ENCODE measurements at regions of chr17 and their contacts with region 1.

Region 1: DNA sequence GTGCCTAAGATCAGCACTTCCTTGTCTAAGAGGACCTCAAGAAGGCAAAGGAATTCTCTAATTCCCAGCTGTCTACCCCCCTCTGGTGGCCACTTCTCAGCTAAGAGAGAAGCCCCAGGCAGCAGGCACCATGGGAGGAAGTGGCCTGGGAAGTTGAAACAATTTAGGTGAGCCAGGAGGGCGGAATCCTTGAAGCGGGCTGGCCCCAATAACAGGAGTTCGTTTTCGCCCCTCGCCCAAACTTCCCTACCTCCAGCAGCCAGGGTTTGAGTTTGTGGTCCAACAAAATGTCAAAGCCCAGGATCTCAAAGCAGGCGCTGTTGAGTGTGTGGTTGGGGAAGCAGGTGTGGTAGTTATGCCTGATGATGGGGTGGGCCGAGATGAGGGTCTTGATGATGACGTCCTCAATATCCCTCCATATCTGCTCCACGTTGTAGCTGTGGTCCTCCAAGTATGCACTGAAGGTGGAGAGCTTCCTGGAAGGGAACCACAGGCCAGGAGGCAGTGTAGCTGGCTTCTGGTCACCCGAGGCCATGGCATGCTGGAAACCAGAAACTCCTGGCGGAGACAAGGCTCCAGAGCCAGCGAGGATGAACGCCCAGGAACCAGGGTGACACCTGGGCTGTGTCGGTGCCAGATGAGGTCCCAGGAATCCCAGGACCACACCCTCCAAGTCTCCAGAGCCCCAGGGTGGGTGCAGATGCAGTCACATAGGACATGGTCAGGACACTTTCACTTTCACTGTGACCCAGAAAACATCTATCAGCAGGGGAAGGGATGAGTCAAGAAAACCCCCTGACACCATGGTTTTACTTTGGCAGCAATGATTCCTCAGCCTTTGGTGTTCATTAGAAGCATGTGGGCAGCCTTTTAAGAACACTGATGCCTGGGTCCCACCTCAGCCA is 25.6 kb downstream of the TTLL6 start:
- DNase-seq: peak; percentile 79
- ATAC-seq: peak; percentile 92
- H3K4me3 ChIP-seq: no peak overlapping the region
- H3K27ac ChIP-seq: no peak overlapping the region
- H3K4me1 ChIP-seq: peaks cover 14% of the 10 kb centered on the region
- H3K27me3 ChIP-seq: peaks cover 33% of the 10 kb centered on the region
- CTCF ChIP-seq: peak; percentile 91
- POLR2A ChIP-seq: no peak
- RAD21 ChIP-seq: peak; percentile 80

Region 2: DNA sequence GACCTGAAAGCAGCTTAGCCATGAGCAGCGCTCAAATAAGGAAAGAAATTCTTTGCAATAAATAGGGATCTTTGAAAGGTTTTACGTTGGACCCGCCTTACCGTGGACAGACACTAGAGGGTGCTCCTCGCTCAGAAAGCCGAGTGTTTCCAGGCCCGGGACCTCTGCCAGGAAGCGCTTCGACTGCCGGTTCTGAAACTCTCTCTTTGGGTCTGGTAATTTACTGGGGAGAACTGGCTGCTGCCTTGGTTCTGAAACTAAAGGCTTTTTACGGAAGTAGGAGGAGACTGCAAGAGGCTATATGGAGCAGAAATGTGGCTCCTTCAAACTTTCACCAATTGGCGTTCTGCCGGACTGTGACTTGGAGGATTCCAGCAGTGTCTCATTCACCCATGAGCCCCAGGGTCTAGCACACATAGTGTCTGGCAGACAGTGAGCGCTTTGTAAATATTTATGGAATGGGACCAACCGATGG is 119.6 kb before region 1 on chr17:
- CTCF ChIA-PET with region 1: interaction called, 7 read pairs
- POLR2A ChIA-PET with region 1: no interaction called
- dilution Hi-C with region 1: no loop called
- in situ Hi-C with region 1: loop called (anchors 5 kb)
- intact Hi-C with region 1: no loop called
- DNase-seq: peak; percentile 67
- ATAC-seq: peak; percentile 93
- H3K4me3 ChIP-seq: peak overlapping the region; percentile 35
- H3K27ac ChIP-seq: no peak overlapping the region
- H3K4me1 ChIP-seq: no peaks in the 10 kb centered on the region
- H3K27me3 ChIP-seq: peaks cover 26% of the 10 kb centered on the region
- CTCF ChIP-seq: peak; percentile 91
- POLR2A ChIP-seq: no peak
- RAD21 ChIP-seq: peak; percentile 83

Region 3: GRCh38 chr17:48678141-48678971 is 113.0 kb before region 1 on chr17:
- CTCF ChIA-PET with region 1: interaction called, 14 read pairs
- POLR2A ChIA-PET with region 1: no interaction called
- dilution Hi-C with region 1: no loop called
- in situ Hi-C with region 1: no loop called
- intact Hi-C with region 1: loop called (anchors 1 kb)
- DNase-seq: peak; percentile 19
- ATAC-seq: peak; percentile 98
- H3K4me3 ChIP-seq: no peak overlapping the region
- H3K27ac ChIP-seq: no peak overlapping the region
- H3K4me1 ChIP-seq: no peaks in the 10 kb centered on the region
- H3K27me3 ChIP-seq: peaks cover 49% of the 10 kb centered on the region
- CTCF ChIP-seq: peak; percentile 89
- POLR2A ChIP-seq: no peak
- RAD21 ChIP-seq: peak; percentile 76

Region 4: DNA sequence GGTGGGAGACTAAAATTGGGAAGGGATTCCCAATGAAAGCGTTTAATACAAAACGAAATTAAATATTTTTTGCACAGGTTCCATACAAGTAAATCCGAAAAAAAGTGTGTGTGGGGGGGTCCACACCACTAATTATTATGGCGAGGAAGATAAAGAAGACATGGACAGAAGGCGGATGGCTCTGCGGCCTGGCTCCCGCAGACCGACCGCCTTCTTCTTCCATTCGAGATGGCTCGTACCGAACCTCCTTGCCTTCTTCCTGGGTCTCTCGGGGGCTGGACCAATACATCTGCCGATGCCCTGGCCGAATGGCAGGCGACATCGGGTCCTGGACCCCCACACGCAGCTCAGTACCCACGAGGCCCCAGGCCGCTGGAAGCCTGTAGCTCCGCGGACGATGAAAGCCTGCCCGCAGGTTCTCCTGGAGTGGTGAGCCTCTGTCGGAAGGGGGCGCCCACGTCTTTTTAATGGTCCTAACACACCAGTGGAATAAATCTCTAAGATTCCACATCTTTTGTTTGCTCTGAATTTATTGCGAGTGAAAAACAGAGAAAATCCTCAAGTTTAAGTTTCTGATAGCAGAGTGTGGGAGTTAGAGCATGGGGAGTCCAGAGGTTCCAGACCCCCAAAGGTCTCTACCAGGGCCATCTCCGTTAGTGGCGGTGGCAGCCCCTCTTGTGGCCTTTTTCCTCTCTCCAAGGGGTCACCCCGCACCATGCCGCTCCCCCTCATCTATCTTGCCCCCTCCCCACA is 67.0 kb before region 1 on chr17:
- CTCF ChIA-PET with region 1: interaction called, 8 read pairs
- POLR2A ChIA-PET with region 1: no interaction called
- dilution Hi-C with region 1: no loop called
- in situ Hi-C with region 1: no loop called
- intact Hi-C with region 1: loop called (anchors 1 kb)
- DNase-seq: peak; percentile 67
- ATAC-seq: peak; percentile 94
- H3K4me3 ChIP-seq: no peak overlapping the region
- H3K27ac ChIP-seq: no peak overlapping the region
- H3K4me1 ChIP-seq: no peaks in the 10 kb centered on the region
- H3K27me3 ChIP-seq: peaks cover 95% of the 10 kb centered on the region
- CTCF ChIP-seq: peak; percentile 84
- POLR2A ChIP-seq: no peak
- RAD21 ChIP-seq: peak; percentile 80

Region 5: DNA sequence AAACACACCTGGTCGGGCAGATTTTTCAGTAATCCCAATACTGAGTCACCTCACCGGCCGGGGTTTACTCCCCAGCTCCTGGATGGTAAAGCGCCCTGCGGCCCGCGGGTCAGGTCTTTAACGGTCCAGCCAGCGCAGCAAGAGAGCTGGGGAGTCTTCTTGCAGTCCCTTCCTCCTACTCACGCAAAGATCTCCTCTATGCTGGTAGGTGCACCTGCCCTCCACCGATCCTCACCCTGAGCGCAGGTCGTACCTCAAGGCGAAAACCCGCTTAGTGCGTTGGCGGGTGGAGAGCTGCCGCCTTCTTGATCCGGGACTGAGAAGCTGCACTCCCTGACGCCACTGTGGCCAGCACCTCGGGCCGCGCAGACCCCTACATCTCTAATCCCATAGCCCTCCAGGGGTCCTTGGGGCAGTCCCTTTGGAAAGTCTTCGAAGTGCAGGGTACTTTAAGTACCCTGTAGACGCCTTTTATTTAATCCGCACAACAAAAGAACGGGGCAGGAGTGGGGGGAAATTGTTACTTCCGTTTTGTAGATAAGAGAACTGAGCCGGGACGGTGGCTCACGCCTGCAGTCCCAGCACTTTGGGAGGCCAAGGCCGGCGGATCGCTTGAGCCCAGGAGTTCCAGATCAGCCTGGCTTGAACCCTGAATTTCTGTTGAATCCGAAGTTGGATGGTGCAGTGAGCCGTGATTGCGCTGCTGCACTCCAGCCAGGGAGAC is 52.4 kb before region 1 on chr17:
- CTCF ChIA-PET with region 1: no interaction called
- POLR2A ChIA-PET with region 1: no interaction called
- dilution Hi-C with region 1: no loop called
- in situ Hi-C with region 1: loop called (anchors 10 kb)
- intact Hi-C with region 1: no loop called
- DNase-seq: no peak
- ATAC-seq: no peak
- H3K4me3 ChIP-seq: no peak overlapping the region
- H3K27ac ChIP-seq: no peak overlapping the region
- H3K4me1 ChIP-seq: no peaks in the 10 kb centered on the region
- H3K27me3 ChIP-seq: peaks cover 92% of the 10 kb centered on the region
- CTCF ChIP-seq: no peak
- POLR2A ChIP-seq: no peak
- RAD21 ChIP-seq: no peak

Region 6: DNA sequence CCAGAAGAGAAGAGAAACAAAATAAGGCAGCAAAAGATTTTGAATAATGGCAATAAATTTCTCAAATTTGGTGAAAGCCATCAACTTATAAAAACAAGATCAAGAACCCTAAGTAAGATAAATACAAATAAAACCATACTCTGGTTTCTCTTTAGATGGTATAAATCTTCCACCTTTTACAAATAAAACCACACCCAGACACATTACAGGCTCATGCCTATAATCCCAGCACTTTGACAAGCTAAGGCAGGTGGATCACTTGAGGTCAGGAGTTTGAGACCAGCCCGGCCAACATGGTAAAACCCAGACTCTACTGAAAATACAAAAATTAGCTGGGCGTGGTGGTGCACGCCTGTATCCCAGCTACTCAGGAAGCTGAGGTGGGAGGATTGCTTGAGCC is 18.1 kb before region 1 on chr17:
- CTCF ChIA-PET with region 1: no interaction called
- POLR2A ChIA-PET with region 1: no interaction called
- dilution Hi-C with region 1: no loop called
- in situ Hi-C with region 1: no loop called
- intact Hi-C with region 1: no loop called
- DNase-seq: no peak
- ATAC-seq: no peak
- H3K4me3 ChIP-seq: no peak overlapping the region
- H3K27ac ChIP-seq: no peak overlapping the region
- H3K4me1 ChIP-seq: no peaks in the 10 kb centered on the region
- H3K27me3 ChIP-seq: peaks cover 33% of the 10 kb centered on the region
- CTCF ChIP-seq: no peak
- POLR2A ChIP-seq: no peak
- RAD21 ChIP-seq: no peak

Region 7: DNA sequence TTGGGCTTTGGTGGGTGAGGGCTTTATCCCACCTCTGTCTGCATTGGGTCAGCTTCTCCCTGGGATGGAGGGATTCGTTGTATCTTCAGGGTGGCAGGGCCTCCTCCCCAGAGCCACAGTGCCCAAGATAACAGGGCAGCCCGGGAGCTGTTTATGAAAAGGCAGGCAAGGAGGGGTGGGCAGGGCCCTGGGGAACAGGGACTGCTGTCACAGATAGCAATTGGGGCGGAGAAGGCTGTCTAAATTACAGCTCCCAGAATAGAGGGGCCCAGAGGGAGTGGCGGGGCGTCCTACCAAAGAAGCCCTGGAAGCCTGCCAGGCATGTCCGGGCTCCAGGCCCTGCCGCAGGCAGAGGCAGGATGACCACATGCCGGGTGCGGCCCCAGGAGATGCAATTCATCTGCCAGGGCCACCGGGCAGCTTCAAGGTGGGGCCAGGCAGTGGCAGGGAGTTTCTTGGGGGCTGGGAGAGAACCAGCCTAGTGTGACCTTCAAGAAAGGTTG is 458.0 kb after region 1 on chr17:
- CTCF ChIA-PET with region 1: no interaction called
- POLR2A ChIA-PET with region 1: no interaction called
- dilution Hi-C with region 1: no loop called
- in situ Hi-C with region 1: no loop called
- intact Hi-C with region 1: no loop called
- DNase-seq: no peak
- ATAC-seq: peak; percentile 48
- H3K4me3 ChIP-seq: no peak overlapping the region
- H3K27ac ChIP-seq: no peak overlapping the region
- H3K4me1 ChIP-seq: no peaks in the 10 kb centered on the region
- H3K27me3 ChIP-seq: peaks cover 17% of the 10 kb centered on the region
- CTCF ChIP-seq: no peak
- POLR2A ChIP-seq: no peak
- RAD21 ChIP-seq: no peak